CD4-positive, alpha-beta memory T cell (primary cell): ENCODE measurements at regions of chr15 and their contacts with region 1.

Region 1: GRCh38 chr15:50908210-50909009 is at the start of gene AP4E1:
- DNase-seq: peak; percentile 93 to 96 (median 94)
- H3K4me3 ChIP-seq: peak within 1 kb of the TSS; percentile 57 to 89
- H3K4me3 Mint-ChIP-seq: peak within 1 kb of the TSS; percentile 90 to 98 (median 92)
- H3K27ac ChIP-seq: peak within 1 kb of the TSS; percentile 100
- H3K27ac Mint-ChIP-seq: peak within 1 kb of the TSS; percentile 96 to 99 (median 98)
- H3K4me1 ChIP-seq: peaks cover 16% of the 10 kb centered on the region
- H3K4me1 Mint-ChIP-seq: peaks cover 15 to 44% (median 19%) of the 10 kb centered on the region in 4 donors
- H3K27me3 ChIP-seq: no peaks in the 10 kb centered on the region
- H3K27me3 Mint-ChIP-seq: no peaks in the 10 kb centered on the region
- total RNA-seq, gene AP4E1: 13.4 to 15.2 TPM

Region 2: DNA sequence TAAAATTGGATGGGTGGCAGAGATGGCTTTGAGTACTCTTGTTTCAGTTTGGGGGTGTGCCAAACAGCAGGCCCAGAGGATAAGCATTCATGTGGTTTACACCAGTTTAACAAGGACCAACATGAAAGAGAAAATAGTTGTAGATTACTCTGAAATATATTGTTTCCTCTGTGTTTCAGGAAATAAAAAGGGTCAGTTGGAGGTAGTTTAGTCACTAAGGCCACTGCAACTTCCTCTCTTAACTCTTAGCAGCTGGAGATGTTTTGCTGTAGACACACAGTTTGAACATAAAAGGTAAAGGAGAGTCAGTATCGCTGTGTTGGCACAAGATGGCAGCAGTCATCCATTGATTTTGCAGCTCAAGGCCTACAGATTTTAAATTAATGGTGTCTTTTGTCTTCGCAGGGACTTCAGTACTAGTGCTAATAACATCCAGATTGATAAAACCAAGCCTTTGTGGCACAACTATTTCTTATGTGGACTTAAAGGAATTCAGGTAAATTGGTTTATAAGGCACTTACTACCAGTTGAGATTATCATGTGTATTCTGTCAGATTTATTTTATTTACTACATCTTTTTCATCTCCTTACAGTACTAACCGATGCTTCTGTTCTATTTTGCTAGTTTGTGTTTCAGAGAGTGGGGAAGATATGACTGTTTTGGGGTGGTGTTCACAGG is 1672.8 kb before region 1 on chr15:
- CTCF ChIA-PET with region 1: no interaction called
- POLR2A ChIA-PET with region 1: no interaction called
- intact Hi-C with region 1: loop called (anchors 5 kb)
- DNase-seq: peak; percentile 36 to 46 (median 41)
- H3K4me3 ChIP-seq: no peak overlapping the region
- H3K4me3 Mint-ChIP-seq: no peak overlapping the region
- H3K27ac ChIP-seq: no peak overlapping the region
- H3K27ac Mint-ChIP-seq: peak overlapping the region in 6 of 7 donors; percentile 31 to 86 (median 70)
- H3K4me1 ChIP-seq: peaks cover 10% of the 10 kb centered on the region
- H3K4me1 Mint-ChIP-seq: peaks cover 10 to 16% (median 13%) of the 10 kb centered on the region in 4 donors
- H3K27me3 ChIP-seq: no peaks in the 10 kb centered on the region
- H3K27me3 Mint-ChIP-seq: no peaks in the 10 kb centered on the region

Region 3: DNA sequence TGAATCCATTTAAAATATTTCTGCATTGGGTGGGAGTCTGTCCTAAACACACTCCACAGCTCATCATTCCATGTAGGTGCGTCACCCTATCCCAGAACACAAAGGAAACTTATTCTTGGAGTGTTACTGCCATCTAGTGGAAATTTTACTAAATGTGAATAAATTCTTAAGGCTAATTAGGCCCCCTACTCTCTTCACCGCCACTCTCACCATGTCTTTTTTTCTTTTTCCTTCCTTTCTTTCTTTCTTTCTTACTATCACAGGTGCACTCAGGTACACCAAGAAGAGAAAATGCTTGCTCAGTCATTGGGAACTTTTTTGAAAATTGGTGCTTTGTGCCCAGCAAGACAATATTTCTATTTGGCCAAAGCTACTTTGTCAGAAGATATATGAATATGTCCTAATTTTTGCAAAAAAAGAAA is 762.9 kb before region 1 on chr15:
- CTCF ChIA-PET with region 1: no interaction called
- POLR2A ChIA-PET with region 1: no interaction called
- intact Hi-C with region 1: loop called (anchors 5 kb)
- DNase-seq: peak in 4 of 5 donors; percentile 28 to 50 (median 34)
- H3K4me3 ChIP-seq: no peak overlapping the region
- H3K4me3 Mint-ChIP-seq: no peak overlapping the region
- H3K27ac ChIP-seq: no peak overlapping the region
- H3K27ac Mint-ChIP-seq: no peak overlapping the region
- H3K4me1 ChIP-seq: no peaks in the 10 kb centered on the region
- H3K4me1 Mint-ChIP-seq: no peaks in the 10 kb centered on the region
- H3K27me3 ChIP-seq: no peaks in the 10 kb centered on the region
- H3K27me3 Mint-ChIP-seq: no peaks in the 10 kb centered on the region

Region 4: DNA sequence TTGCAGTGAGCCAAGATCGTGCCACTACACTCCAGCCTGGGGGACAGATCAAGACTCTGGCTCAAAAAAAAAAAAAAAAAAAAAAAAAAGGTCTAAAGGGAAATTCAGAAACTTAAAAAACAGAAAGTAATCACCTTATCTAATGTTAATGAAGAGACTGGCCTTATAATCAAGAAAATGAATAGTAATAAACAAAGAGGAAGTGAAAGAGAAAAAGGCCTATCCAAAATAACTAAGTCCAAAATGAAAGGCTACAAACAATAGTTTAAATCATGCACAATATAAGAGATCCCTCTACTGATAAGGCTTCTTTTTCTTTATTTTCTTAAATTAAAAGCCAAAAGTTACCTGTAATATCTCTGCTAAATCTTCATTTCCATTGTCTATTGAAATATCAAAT is 605.8 kb before region 1 on chr15:
- CTCF ChIA-PET with region 1: no interaction called
- POLR2A ChIA-PET with region 1: no interaction called
- intact Hi-C with region 1: no loop called
- DNase-seq: no peak
- H3K4me3 ChIP-seq: no peak overlapping the region
- H3K4me3 Mint-ChIP-seq: no peak overlapping the region
- H3K27ac ChIP-seq: no peak overlapping the region
- H3K27ac Mint-ChIP-seq: peak overlapping the region in 1 of 7 donors; percentile 64
- H3K4me1 ChIP-seq: no peaks in the 10 kb centered on the region
- H3K4me1 Mint-ChIP-seq: peaks cover 0 to 3% (median 0%) of the 10 kb centered on the region in 4 donors
- H3K27me3 ChIP-seq: no peaks in the 10 kb centered on the region
- H3K27me3 Mint-ChIP-seq: no peaks in the 10 kb centered on the region

Region 5: DNA sequence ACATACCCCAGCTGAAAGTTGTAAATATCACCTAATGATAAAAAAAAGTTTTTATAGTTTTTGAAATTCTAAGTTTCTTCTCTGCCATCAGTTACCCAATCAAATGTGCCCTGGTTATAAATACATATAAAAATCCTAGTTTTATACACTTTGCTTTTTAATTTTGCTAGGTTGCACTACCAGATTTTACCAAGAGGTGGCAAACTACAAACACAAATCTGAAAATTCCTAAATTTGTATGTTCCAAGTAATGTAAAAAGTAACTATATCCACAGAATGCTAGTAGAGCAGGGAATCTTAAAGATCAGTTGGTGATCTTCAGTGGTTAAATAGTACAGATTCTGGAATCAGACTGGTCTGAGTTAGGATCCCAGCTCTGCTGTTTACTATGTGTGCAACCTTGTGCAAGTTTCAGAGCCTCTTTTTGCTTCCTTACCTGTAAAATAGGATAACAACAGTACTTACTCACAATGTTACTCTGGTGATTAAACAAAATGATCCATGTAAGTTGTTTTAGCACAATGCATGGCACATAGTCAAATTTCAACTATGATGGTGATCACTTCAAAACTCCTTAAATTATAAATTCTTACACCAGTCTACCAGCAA is 232.8 kb before region 1 on chr15:
- CTCF ChIA-PET with region 1: interaction called, 12 read pairs
- POLR2A ChIA-PET with region 1: interaction called, 5 read pairs
- intact Hi-C with region 1: loop called (anchors 1 kb)
- DNase-seq: peak in 4 of 5 donors; percentile 18 to 44 (median 30)
- H3K4me3 ChIP-seq: no peak overlapping the region
- H3K4me3 Mint-ChIP-seq: no peak overlapping the region
- H3K27ac ChIP-seq: no peak overlapping the region
- H3K27ac Mint-ChIP-seq: peak overlapping the region in 5 of 7 donors; percentile 19 to 56 (median 46)
- H3K4me1 ChIP-seq: peaks cover 21% of the 10 kb centered on the region
- H3K4me1 Mint-ChIP-seq: peaks cover 11 to 41% (median 29%) of the 10 kb centered on the region in 4 donors
- H3K27me3 ChIP-seq: no peaks in the 10 kb centered on the region
- H3K27me3 Mint-ChIP-seq: no peaks in the 10 kb centered on the region

Region 6: GRCh38 chr15:50765195-50765973 is 143.0 kb before region 1 on chr15 and contains the start of gene SPPL2A:
- CTCF ChIA-PET with region 1: no interaction called
- POLR2A ChIA-PET with region 1: interaction called, 7 read pairs
- intact Hi-C with region 1: loop called (anchors 1 kb)
- DNase-seq: peak; percentile 71 to 84 (median 73)
- H3K4me3 ChIP-seq: peak within 1 kb of the TSS; percentile 85 to 91
- H3K4me3 Mint-ChIP-seq: peak within 1 kb of the TSS; percentile 87 to 97 (median 94)
- H3K27ac ChIP-seq: peak within 1 kb of the TSS; percentile 93
- H3K27ac Mint-ChIP-seq: peak within 1 kb of the TSS; percentile 94 to 98 (median 97)
- H3K4me1 ChIP-seq: peaks cover 24% of the 10 kb centered on the region
- H3K4me1 Mint-ChIP-seq: peaks cover 31 to 54% (median 44%) of the 10 kb centered on the region in 4 donors
- H3K27me3 ChIP-seq: no peaks in the 10 kb centered on the region
- H3K27me3 Mint-ChIP-seq: no peaks in the 10 kb centered on the region
- total RNA-seq, gene SPPL2A: 75.2 to 80.3 TPM

Region 7: DNA sequence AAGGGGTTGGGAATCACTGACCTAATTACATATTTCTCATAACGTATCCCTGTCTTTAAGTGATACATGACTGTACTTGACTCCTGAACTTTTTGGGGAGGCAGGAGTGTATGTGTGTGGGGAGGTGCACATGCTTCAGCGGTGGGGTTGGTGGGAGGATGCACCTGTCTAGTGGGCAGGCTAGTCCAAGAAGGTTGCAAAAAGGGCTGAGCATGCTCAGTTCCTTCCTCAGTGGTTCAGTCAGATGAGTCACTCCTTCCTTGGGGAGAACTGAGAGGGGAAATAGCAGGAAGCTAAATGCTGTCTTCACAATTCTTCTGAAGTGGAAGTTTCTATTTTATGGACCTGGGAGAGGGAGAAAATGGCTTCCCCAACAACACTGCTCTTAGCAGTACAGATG is 24.5 kb before region 1 on chr15:
- CTCF ChIA-PET with region 1: interaction called, 29 read pairs
- POLR2A ChIA-PET with region 1: interaction called, 5 read pairs
- intact Hi-C with region 1: loop called (anchors 1 kb)
- DNase-seq: no peak
- H3K4me3 ChIP-seq: no peak overlapping the region
- H3K4me3 Mint-ChIP-seq: peak overlapping the region in 1 of 8 donors; percentile 19
- H3K27ac ChIP-seq: no peak overlapping the region
- H3K27ac Mint-ChIP-seq: peak overlapping the region in 2 of 7 donors; percentile 19 to 57
- H3K4me1 ChIP-seq: peaks cover 24% of the 10 kb centered on the region
- H3K4me1 Mint-ChIP-seq: peaks cover 16 to 53% (median 30%) of the 10 kb centered on the region in 4 donors
- H3K27me3 ChIP-seq: no peaks in the 10 kb centered on the region
- H3K27me3 Mint-ChIP-seq: no peaks in the 10 kb centered on the region